Activated B cell treated with CpG ODN at 0.5 μM for 24 hours (primary cell): ENCODE measurements at regions of chr4 and their contacts with region 1.

Region 1: GRCh38 chr4:82284858-82285805 is 88.7 kb downstream of the HNRNPD start:
- DNase-seq: peak; percentile 100
- ATAC-seq: peak; percentile 92
- H3K4me3 Mint-ChIP-seq: peak overlapping the region; percentile 83
- H3K27ac Mint-ChIP-seq: peak overlapping the region; percentile 77
- H3K4me1 Mint-ChIP-seq: peaks cover 21% of the 10 kb centered on the region
- H3K27me3 Mint-ChIP-seq: no peaks in the 10 kb centered on the region
- CTCF ChIP-seq: peak; percentile 97

Region 2: DNA sequence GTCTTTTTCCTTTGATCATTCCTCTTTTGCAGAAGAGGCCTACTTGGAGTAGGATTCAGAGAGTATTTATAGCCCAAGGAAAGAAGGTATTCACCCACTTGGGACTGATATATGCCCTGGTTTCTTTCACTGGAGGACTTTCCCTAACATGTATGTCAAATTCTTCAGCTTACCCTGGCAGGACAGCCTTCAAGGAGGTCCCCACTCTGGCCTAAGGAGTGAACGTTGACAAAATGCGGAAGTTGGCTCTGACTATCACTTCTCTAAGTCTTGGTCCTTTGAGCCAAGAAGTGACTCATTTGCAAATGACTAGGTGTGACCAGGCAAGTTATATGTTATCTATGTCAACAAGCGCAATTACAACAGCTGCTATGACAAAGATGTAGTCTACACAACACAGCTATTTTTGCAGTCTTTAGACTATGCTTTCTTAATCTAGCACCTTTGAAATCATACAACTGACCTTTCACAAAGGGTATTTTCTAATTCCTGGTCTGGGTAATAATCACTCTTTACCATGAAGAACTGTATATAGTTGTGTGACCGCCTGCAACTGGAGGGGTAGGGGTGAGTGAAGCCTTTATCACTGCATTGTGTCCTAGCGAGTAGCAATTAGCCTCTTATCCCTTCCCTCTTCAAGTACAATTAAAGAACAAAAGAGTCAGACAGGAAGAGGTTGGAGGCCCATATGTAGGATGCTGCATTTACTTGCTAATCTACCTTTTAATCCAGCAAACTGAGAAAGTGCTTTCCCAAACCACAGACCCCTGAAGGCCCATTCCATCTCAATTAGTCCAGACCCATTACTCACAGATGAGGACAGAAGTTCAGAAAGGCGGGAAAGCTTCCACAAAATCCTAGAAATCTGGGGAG is 863.5 kb before region 1 on chr4:
- CTCF ChIA-PET with region 1: no interaction called
- POLR2A ChIA-PET with region 1: no interaction called
- intact Hi-C with region 1: loop called (anchors 5 kb)
- DNase-seq: no peak
- ATAC-seq: peak; percentile 99
- H3K4me3 Mint-ChIP-seq: peak overlapping the region; percentile 38
- H3K27ac Mint-ChIP-seq: peak overlapping the region; percentile 83
- H3K4me1 Mint-ChIP-seq: peaks cover 49% of the 10 kb centered on the region
- H3K27me3 Mint-ChIP-seq: no peaks in the 10 kb centered on the region
- CTCF ChIP-seq: no peak

Region 3: DNA sequence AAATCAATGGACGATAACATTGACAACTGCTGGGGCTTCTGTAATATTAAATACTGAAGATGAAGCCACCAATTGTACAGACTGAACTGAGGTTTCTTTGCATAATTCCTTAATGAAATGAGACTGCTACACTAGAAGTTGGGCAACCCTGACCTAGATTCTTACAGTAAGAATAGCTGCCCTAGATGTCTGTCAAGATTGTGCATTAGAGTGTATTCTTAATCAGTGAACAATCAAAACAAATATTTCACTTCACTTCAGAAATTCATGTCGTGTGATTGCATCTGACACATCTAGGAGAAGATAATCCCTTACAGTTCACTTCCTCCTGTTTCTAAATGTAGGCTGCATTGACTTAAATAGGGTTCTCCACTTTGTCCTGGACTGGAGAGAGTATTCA is 194.5 kb before region 1 on chr4:
- CTCF ChIA-PET with region 1: no interaction called
- POLR2A ChIA-PET with region 1: no interaction called
- intact Hi-C with region 1: no loop called
- DNase-seq: no peak
- ATAC-seq: no peak
- H3K4me3 Mint-ChIP-seq: no peak overlapping the region
- H3K27ac Mint-ChIP-seq: no peak overlapping the region
- H3K4me1 Mint-ChIP-seq: no peaks in the 10 kb centered on the region
- H3K27me3 Mint-ChIP-seq: peaks cover 1% of the 10 kb centered on the region
- CTCF ChIP-seq: no peak

Region 4: GRCh38 chr4:82248903-82249632 is 36.1 kb before region 1 on chr4:
- CTCF ChIA-PET with region 1: no interaction called
- POLR2A ChIA-PET with region 1: interaction called, 3 read pairs
- intact Hi-C with region 1: loop called (anchors 2 kb)
- DNase-seq: no peak
- ATAC-seq: no peak
- H3K4me3 Mint-ChIP-seq: no peak overlapping the region
- H3K27ac Mint-ChIP-seq: no peak overlapping the region
- H3K4me1 Mint-ChIP-seq: no peaks in the 10 kb centered on the region
- H3K27me3 Mint-ChIP-seq: peaks cover 2% of the 10 kb centered on the region
- CTCF ChIP-seq: no peak

Region 5: GRCh38 chr4:82890901-82891706 is 606.0 kb after region 1 on chr4 and contains the start of gene SEC31A:
- CTCF ChIA-PET with region 1: no interaction called
- POLR2A ChIA-PET with region 1: no interaction called
- intact Hi-C with region 1: loop called (anchors 10 kb)
- DNase-seq: peak; percentile 97
- ATAC-seq: peak; percentile 92
- H3K4me3 Mint-ChIP-seq: peak within 1 kb of the TSS; percentile 93
- H3K27ac Mint-ChIP-seq: peak within 1 kb of the TSS; percentile 94
- H3K4me1 Mint-ChIP-seq: peaks cover 34% of the 10 kb centered on the region
- H3K27me3 Mint-ChIP-seq: no peaks in the 10 kb centered on the region
- CTCF ChIP-seq: no peak
- total RNA-seq, gene SEC31A: 154 and 172 TPM in 2 replicates

Region 6: GRCh38 chr4:83010111-83010521 is 725.0 kb after region 1 on chr4:
- CTCF ChIA-PET with region 1: no interaction called
- POLR2A ChIA-PET with region 1: no interaction called
- intact Hi-C with region 1: no loop called
- DNase-seq: no peak
- ATAC-seq: no peak
- H3K4me3 Mint-ChIP-seq: peak overlapping the region; percentile 95
- H3K27ac Mint-ChIP-seq: peak overlapping the region; percentile 93
- H3K4me1 Mint-ChIP-seq: peaks cover 49% of the 10 kb centered on the region
- H3K27me3 Mint-ChIP-seq: no peaks in the 10 kb centered on the region
- CTCF ChIP-seq: no peak

Region 7: DNA sequence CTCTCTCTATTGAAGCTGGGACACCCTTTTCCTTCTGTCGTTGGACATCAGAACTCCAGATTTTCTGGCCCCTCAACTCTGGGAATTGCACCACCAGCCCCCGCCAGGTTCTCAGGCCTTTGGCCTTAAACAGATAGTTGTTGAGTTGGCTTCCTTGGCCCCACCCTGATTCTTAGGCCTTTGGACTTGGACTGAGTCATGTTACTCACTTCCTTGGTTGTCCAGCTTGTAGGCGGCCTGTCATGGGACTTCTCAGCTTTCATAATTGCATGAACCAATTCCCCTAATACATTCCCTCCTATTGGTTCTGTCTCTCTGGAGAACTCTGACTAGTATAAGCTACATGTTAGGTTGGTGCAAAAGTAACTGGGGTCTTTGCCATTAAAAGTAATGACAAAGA is 1446.5 kb after region 1 on chr4:
- CTCF ChIA-PET with region 1: no interaction called
- POLR2A ChIA-PET with region 1: no interaction called
- intact Hi-C with region 1: no loop called
- DNase-seq: no peak
- ATAC-seq: no peak
- H3K4me3 Mint-ChIP-seq: no peak overlapping the region
- H3K27ac Mint-ChIP-seq: no peak overlapping the region
- H3K4me1 Mint-ChIP-seq: no peaks in the 10 kb centered on the region
- H3K27me3 Mint-ChIP-seq: no peaks in the 10 kb centered on the region
- CTCF ChIP-seq: no peak